Calu3 (cell line): ENCODE measurements at regions of chr2 and their contacts with region 1.

Region 1: DNA sequence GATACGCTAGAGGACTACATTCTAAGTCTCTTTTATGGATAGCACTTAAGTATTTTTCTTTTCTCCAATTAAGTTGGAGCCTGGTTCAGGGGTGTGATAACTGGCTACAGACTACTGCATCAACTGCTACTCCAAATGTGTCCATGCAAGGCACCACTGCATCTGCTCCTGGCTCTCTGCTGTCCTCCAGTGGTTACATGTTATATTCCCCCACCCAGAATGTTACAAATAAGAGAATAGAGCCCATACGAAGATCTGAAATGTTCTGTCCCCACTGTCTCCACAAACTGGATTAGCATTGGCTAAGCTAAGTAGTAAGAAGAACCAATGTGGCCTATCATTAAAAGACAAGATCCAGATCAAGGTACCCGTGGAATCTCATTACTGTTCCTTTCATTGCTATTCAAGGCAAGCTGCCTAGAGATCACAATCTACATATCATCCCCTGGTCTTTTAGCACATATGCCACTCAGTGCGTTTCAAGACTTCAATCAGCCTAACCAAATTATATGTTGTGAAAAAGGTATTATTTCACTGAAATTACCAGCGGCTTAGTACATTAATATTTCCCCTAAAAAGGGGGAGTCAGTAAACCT is 308.3 kb upstream of the SLC8A1 start:
- DNase-seq: peak; percentile 51
- H3K4me3 Mint-ChIP-seq: no peak overlapping the region
- H3K27ac Mint-ChIP-seq: no peak overlapping the region
- H3K4me1 Mint-ChIP-seq: no peaks in the 10 kb centered on the region
- H3K27me3 Mint-ChIP-seq: no peaks in the 10 kb centered on the region
- CTCF ChIP-seq: peak; percentile 70

Region 2: GRCh38 chr2:40488101-40488601 is 272.0 kb before region 1 on chr2:
- CTCF ChIA-PET with region 1: no interaction called
- intact Hi-C with region 1: loop called (anchors 5 kb)
- DNase-seq: no peak
- H3K4me3 Mint-ChIP-seq: no peak overlapping the region
- H3K27ac Mint-ChIP-seq: no peak overlapping the region
- H3K4me1 Mint-ChIP-seq: no peaks in the 10 kb centered on the region
- H3K27me3 Mint-ChIP-seq: no peaks in the 10 kb centered on the region
- CTCF ChIP-seq: peak; percentile 40

Region 3: GRCh38 chr2:40584432-40584831 is 175.7 kb before region 1 on chr2:
- CTCF ChIA-PET with region 1: no interaction called
- intact Hi-C with region 1: loop called (anchors 10 kb)
- DNase-seq: no peak
- H3K4me3 Mint-ChIP-seq: no peak overlapping the region
- H3K27ac Mint-ChIP-seq: no peak overlapping the region
- H3K4me1 Mint-ChIP-seq: no peaks in the 10 kb centered on the region
- H3K27me3 Mint-ChIP-seq: no peaks in the 10 kb centered on the region
- CTCF ChIP-seq: no peak